IMR-90 (cell line): ENCODE measurements at regions of chr2 and their contacts with region 1.

Region 1: DNA sequence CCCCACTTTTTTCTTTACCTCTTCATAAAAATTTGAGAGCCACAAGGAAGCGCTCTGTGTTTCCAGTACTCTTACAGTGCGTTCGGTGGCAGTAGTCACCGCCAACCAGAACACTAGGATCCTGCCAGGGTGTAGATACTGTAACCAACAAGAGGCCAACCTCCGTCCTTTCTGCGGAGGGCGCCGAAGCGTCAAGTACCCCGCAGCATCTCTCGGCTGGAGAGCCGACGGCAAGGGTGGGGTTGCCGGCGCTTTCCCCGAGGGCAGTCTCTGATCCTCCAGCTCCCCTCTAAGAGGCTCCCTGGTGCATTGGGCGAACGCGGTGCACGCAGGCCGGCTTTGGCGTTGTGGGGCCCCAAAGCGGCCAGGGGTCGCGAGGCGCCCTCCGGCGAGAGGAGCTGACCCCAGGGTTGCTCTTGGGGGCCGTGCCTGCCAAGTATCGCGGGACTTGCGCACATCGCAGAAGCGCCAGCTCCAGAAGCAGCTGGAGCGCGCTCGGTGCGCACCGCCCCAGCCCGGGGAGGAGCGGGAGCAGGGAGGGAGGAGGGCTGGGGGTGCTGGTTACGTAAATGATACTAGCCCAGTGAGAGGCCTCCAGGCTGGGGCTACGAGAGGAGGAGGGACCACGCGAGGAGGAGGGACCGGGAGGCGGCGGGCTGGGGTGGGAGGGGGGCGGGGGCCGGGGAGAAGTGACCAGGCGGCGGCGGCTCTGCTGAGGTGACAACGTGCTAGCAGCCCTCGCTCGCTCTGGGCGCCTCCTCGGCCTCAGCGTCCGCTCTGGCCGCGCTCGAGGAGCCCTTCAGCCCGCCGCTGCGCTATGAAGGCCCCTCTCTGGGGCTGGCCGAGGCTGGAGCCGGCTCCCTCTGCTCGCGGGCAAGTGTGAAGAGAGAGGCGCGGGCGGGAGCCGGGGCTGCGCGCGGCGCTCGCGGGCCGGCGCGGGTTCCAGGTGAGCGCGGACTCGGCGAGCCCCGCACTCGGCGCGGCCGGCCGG is at the start of gene GALNT13:
- DNase-seq: no peak
- ATAC-seq: peak; percentile 91
- H3K4me3 ChIP-seq: no peak within 1 kb of the TSS
- H3K27ac ChIP-seq: no peak within 1 kb of the TSS
- H3K4me1 ChIP-seq: no peaks in the 10 kb centered on the region
- H3K27me3 ChIP-seq: no peaks in the 10 kb centered on the region
- CTCF ChIP-seq: no peak
- POLR2A ChIP-seq: no peak
- RAD21 ChIP-seq: no peak
- total RNA-seq, gene GALNT13: not detected in 2 replicates

Region 2: DNA sequence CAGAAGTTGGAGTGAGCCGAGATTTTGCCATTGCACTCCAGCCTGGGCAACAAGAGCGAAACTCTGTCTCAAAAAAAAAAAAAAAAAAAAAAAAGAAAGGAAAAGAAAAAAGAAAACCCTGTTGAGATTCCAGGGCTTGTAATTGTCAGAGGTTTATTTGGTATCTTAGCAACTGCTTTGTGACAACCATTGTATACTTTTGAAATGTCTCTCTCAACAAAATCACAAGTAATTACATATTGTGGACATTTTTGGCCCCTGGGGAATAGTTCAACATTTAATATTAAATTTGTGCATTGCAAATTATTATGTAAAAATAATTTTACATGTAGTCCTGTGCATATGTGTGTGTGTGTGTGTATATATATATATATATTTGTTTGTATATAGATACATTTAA is 271.0 kb after region 1 on chr2:
- CTCF ChIA-PET with region 1: no interaction called
- POLR2A ChIA-PET with region 1: no interaction called
- dilution Hi-C with region 1: no loop called
- in situ Hi-C with region 1: no loop called
- intact Hi-C with region 1: loop called (anchors 5 kb)
- DNase-seq: no peak
- ATAC-seq: no peak
- H3K4me3 ChIP-seq: no peak overlapping the region
- H3K27ac ChIP-seq: no peak overlapping the region
- H3K4me1 ChIP-seq: no peaks in the 10 kb centered on the region
- H3K27me3 ChIP-seq: no peaks in the 10 kb centered on the region
- CTCF ChIP-seq: no peak
- POLR2A ChIP-seq: no peak
- RAD21 ChIP-seq: no peak

Region 3: GRCh38 chr2:154375579-154375931 is 504.0 kb after region 1 on chr2:
- CTCF ChIA-PET with region 1: no interaction called
- POLR2A ChIA-PET with region 1: no interaction called
- dilution Hi-C with region 1: no loop called
- in situ Hi-C with region 1: no loop called
- intact Hi-C with region 1: loop called (anchors 2 kb)
- DNase-seq: no peak
- ATAC-seq: no peak
- H3K4me3 ChIP-seq: no peak overlapping the region
- H3K27ac ChIP-seq: no peak overlapping the region
- H3K4me1 ChIP-seq: no peaks in the 10 kb centered on the region
- H3K27me3 ChIP-seq: no peaks in the 10 kb centered on the region
- CTCF ChIP-seq: no peak
- POLR2A ChIP-seq: no peak
- RAD21 ChIP-seq: no peak